Heart right ventricle (tissue), 16 donors: ENCODE measurements at regions of chr1 and their contacts with region 1.

Region 1: DNA sequence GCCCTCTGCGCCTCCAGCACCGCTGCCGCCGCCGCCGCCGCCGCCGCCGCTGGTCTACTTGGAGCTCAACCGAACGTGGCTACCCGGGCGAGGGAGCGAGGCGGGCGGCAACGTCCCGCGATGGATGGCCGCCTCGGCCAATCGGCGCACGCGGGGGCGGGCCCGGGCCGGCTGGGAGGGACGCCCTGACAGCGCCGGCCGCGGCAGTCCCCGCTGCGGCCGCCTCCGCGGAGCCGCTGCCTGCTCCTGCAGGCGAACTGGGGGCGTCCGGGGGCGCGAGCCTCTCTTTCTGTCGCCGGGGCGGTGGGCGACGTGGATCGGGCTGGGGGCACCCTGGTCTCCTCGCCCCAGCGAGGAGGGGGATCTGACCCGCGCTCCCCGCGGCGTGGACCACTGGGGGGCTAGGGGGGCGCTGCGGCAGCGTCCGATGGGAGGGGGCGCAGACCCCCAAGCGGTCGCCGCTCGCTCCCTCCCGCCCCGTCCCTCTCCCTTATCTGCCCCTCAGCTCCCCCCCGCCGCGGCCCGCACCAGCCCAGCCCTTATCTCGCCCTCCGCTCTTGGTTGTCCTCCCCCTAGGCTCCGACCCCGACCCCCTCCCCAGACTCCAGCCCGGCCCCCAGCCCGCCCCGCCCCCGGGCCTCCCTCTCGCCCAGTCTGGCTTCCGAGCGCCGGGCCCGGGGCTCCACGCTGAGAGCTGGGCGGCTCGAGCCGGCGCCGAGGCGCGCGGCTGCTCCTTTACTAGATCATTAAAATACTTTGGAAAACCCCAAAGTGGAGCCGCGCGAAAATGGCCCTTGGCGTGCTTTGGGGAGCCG is at the start of gene SSBP3:
- DNase-seq: peak; percentile 92 to 95
- ATAC-seq: peak; percentile 83 to 95 (median 91)
- H3K4me3 ChIP-seq: peak within 1 kb of the TSS; percentile 82 to 98 (median 92)
- H3K27ac ChIP-seq: peak within 1 kb of the TSS; percentile 85 to 98 (median 93)
- H3K4me1 ChIP-seq: peaks cover 10 to 57% (median 46%) of the 10 kb centered on the region in 9 donors
- H3K27me3 ChIP-seq: no peaks in the 10 kb centered on the region
- CTCF ChIP-seq: peak in 3 of 9 donors; percentile 19 to 23 (median 22)
- total RNA-seq, gene SSBP3: 33.7 to 71.9 (median 52.8) TPM

Region 2: DNA sequence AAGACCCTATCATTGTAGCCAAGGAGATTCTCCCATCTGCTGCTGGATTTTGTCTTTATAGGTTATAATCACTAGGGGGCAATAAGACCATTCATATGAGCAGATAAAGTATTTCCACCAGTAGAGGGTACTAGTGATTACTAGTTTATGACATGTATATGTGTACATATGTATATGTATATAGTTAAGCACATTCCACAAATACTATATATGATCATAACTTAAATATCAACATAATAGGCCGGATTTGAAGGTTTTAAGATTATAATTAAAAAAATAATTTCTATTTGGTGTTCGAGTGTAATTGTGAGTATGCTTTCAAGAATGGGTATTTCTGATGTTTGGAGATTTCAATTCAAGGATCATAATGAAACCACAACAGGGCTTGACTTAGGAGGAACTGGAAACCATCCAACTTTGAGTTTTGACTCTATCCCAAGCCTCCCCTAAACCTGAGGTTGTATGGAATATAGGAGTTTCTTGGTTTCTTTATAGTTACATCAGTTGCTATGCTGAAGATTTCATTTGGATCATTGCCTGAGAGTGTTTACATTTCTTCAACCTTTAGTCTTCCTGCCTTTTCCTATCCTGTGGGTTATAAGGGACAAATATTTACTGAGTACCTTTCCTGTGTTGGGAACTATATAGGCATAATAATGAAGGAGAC is 336.2 kb before region 1 on chr1:
- intact Hi-C with region 1: loop called in 3 of 10 experiments (anchors 1 to 10 kb)
- DNase-seq: no peak
- ATAC-seq: peak; percentile 53 to 73 (median 64)
- H3K4me3 ChIP-seq: no peak overlapping the region
- H3K27ac ChIP-seq: no peak overlapping the region
- H3K4me1 ChIP-seq: no peaks in the 10 kb centered on the region
- H3K27me3 ChIP-seq: no peaks in the 10 kb centered on the region
- CTCF ChIP-seq: peak; percentile 40 to 92 (median 76)

Region 3: DNA sequence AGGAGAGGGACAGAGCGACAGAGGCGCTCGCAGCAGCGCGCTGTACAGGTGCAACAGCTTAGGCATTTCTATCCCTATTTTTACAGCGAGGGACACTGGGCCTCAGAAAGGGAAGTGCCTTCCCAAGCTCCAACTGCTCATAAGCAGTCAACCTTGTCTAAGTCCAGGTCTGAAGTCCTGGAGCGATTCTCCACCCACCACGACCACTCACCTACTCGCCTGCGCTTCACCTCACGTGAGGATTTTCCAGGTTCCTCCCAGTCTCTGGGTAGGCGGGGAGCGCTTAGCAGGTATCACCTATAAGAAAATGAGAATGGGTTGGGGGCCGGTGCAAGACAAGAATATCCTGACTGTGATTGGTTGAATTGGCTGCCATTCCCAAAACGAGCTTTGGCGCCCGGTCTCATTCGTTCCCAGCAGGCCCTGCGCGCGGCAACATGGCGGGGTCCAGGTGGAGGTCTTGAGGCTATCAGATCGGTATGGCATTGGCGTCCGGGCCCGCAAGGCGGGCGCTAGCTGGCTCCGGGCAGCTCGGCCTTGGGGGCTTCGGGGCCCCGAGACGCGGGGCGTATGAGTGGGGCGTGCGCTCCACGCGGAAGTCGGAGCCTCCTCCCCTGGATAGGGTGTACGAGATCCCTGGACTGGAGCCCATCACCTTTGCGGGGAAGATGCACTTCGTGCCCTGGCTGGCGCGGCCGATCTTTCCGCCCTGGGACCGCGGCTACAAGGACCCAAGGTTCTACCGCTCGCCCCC is 206.6 kb before region 1 on chr1 and contains the starts of genes CYB5RL and MRPL37:
- intact Hi-C with region 1: loop called in 4 of 10 experiments (anchors 5 to 10 kb)
- DNase-seq: peak; percentile 85 to 98
- ATAC-seq: peak; percentile 97 to 100 (median 99)
- H3K4me3 ChIP-seq: peak within 1 kb of the TSS; percentile 68 to 100 (median 84)
- H3K27ac ChIP-seq: peak within 1 kb of the TSS in 9 of 10 donors; percentile 60 to 90 (median 81)
- H3K4me1 ChIP-seq: peaks cover 6 to 32% (median 20%) of the 10 kb centered on the region in 9 donors
- H3K27me3 ChIP-seq: no peaks in the 10 kb centered on the region
- CTCF ChIP-seq: no peak
- total RNA-seq, gene CYB5RL: 3.2 to 8.3 (median 5.8) TPM
- total RNA-seq, gene MRPL37: 82.2 to 97.4 (median 90.2) TPM

Region 4: GRCh38 chr1:54273092-54273794 is 133.3 kb before region 1 on chr1:
- intact Hi-C with region 1: loop called in 7 of 10 experiments (anchors 2 to 10 kb)
- DNase-seq: peak; percentile 43 to 71
- ATAC-seq: peak; percentile 31 to 86 (median 67)
- H3K4me3 ChIP-seq: peak overlapping the region in 3 of 10 donors; percentile 1 to 11 (median 3)
- H3K27ac ChIP-seq: peak overlapping the region; percentile 7 to 91 (median 88)
- H3K4me1 ChIP-seq: peaks cover 49 to 89% (median 69%) of the 10 kb centered on the region in 9 donors
- H3K27me3 ChIP-seq: no peaks in the 10 kb centered on the region
- CTCF ChIP-seq: peak in 5 of 9 donors; percentile 27 to 54 (median 32)

Region 5: GRCh38 chr1:54323324-54323739 is 83.2 kb before region 1 on chr1:
- intact Hi-C with region 1: loop called in 3 of 10 experiments (anchors 5 to 10 kb)
- DNase-seq: no peak
- ATAC-seq: peak in 3 of 8 donors; percentile 24 to 32 (median 29)
- H3K4me3 ChIP-seq: no peak overlapping the region
- H3K27ac ChIP-seq: peak overlapping the region in 1 of 10 donors; percentile 69
- H3K4me1 ChIP-seq: peaks cover 25 to 67% (median 58%) of the 10 kb centered on the region in 9 donors
- H3K27me3 ChIP-seq: no peaks in the 10 kb centered on the region
- CTCF ChIP-seq: peak in 7 of 9 donors; percentile 18 to 57 (median 31)

Region 6: GRCh38 chr1:54361342-54361741 is 45.2 kb before region 1 on chr1:
- intact Hi-C with region 1: loop called in 3 of 10 experiments (anchors 5 kb)
- DNase-seq: no peak
- ATAC-seq: no peak
- H3K4me3 ChIP-seq: no peak overlapping the region
- H3K27ac ChIP-seq: peak overlapping the region in 1 of 10 donors; percentile 87
- H3K4me1 ChIP-seq: peaks cover 8 to 91% (median 61%) of the 10 kb centered on the region in 9 donors
- H3K27me3 ChIP-seq: no peaks in the 10 kb centered on the region
- CTCF ChIP-seq: peak in 5 of 9 donors; percentile 15 to 52 (median 32)

Region 7: DNA sequence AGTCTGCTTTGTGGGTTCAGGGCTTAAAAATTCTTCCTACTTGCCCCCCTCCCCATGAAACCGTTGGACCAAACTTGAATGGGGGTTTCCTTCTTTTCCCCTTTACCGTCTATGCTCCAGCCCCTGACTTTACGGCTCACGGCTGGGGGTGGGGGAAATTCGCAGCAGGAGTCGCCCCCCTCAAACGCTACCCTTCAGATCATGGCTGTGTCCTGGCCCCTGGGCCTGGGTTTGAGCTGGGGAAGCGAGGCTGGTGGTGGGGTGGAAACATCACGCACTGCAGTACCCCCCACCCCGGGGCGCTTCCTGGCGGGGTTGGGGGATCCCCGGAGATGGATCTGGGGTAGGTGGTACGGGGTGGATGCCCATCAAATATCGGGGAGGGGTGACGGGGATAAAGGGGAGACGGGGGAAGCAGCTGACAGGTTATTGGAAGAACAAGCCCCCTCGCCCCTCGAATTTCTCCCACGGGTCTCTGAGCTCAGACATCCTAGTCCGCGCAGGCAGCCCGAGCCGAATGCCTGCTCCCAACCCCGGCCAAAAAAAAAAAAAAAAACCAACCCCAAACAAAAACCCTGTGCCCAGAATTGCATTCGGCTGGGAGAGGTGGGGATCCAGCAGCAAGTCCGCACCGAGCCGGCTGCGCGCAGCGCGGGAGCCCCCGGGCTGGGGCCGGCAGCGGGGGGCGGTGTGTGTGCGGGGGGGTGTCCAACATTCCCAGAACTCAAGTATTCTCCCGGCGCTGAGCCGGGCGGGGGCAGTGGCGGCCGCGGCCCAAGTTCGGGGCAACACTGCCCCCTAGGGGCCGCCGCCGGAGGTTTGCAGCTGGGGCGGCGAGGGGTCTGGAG is 82.5 kb after region 1 on chr1:
- intact Hi-C with region 1: loop called in 9 of 10 experiments (anchors 1 to 5 kb)
- DNase-seq: peak; percentile 81 to 84
- ATAC-seq: peak; percentile 73 to 84 (median 82)
- H3K4me3 ChIP-seq: peak overlapping the region; percentile 40 to 75 (median 66)
- H3K27ac ChIP-seq: peak overlapping the region; percentile 76 to 97 (median 93)
- H3K4me1 ChIP-seq: peaks cover 7 to 39% (median 23%) of the 10 kb centered on the region in 9 donors
- H3K27me3 ChIP-seq: no peaks in the 10 kb centered on the region
- CTCF ChIP-seq: peak; percentile 83 to 99 (median 97)

Region 8: GRCh38 chr1:54528613-54529012 is 122.1 kb after region 1 on chr1:
- intact Hi-C with region 1: no loop called
- DNase-seq: no peak
- ATAC-seq: no peak
- H3K4me3 ChIP-seq: no peak overlapping the region
- H3K27ac ChIP-seq: no peak overlapping the region
- H3K4me1 ChIP-seq: no peaks in the 10 kb centered on the region
- H3K27me3 ChIP-seq: no peaks in the 10 kb centered on the region
- CTCF ChIP-seq: no peak